Panc1 (cell line): ENCODE measurements at regions of chr11 and their contacts with region 1.

Region 1: GRCh38 chr11:62726915-62727763 is at the start of gene HNRNPUL2:
- DNase-seq: peak; percentile 87
- ATAC-seq: peak; percentile 91
- H3K4me3 ChIP-seq: peak within 1 kb of the TSS; percentile 68 to 100
- H3K27ac ChIP-seq: peak within 1 kb of the TSS; percentile 99
- H3K4me1 ChIP-seq: peaks cover 9% of the 10 kb centered on the region
- H3K27me3 ChIP-seq: no peaks in the 10 kb centered on the region
- CTCF ChIP-seq: no peak
- total RNA-seq, gene HNRNPUL2: 47.3 TPM

Region 2: GRCh38 chr11:62705880-62706849 is 21.0 kb before region 1 on chr11:
- CTCF ChIA-PET with region 1: no interaction called
- POLR2A ChIA-PET with region 1: interaction called, 13 read pairs
- in situ Hi-C with region 1: no loop called
- intact Hi-C with region 1: no loop called
- DNase-seq: no peak
- ATAC-seq: peak; percentile 91
- H3K4me3 ChIP-seq: peak overlapping the region; percentile 77 to 89
- H3K27ac ChIP-seq: peak overlapping the region; percentile 89
- H3K4me1 ChIP-seq: peaks cover 23% of the 10 kb centered on the region
- H3K27me3 ChIP-seq: no peaks in the 10 kb centered on the region
- CTCF ChIP-seq: no peak